Posterior vena cava (tissue), 2 donors: ENCODE measurements at regions of chr22 and their contacts with region 1.

Region 1: DNA sequence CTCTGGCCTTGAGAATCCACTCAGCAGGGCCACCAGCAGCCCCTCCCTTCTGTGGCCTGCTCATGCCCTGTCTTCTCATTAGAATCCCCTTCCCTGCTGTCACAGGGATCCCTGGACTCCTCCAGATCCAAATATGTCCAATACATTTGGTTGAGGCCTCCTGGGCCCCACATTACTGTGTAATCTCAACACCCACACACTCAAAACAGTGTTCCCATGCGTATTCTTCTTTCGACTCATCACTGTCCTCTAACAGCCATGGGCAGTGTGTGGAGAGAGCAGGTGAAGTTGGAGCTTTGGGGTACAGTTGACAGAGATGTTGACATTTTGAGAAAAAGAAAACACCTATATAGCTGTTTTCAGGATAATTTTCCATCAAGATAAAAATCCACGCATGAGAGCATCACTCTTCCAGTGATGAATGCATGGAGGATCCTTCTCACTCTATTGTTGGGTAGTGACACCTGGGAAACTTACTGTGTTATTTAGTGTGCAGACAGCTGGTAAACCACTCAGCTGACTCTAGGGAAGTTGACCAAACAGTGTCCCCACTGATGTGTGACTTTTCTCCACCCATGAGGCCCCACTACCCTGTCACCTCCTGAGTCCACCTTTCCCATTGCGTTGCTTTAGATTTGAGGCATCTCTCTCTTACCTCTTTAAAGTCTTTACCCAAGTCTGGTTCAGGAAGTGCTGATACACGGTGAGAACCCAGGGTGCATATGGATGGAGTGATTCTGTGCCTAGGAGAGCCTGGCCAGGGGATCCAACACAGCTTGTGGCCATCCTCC is 28.7 kb upstream of the VPREB1 start:
- DNase-seq: no peak

Region 2: GRCh38 chr22:22870577-22871404 is 654.9 kb after region 1 on chr22:
- intact Hi-C with region 1: loop called in 1 of 2 experiments (anchors 5 kb)
- DNase-seq: no peak